CD4-positive, alpha-beta T cell (primary cell): ENCODE measurements at regions of chr16 and their contacts with region 1.

Region 1: DNA sequence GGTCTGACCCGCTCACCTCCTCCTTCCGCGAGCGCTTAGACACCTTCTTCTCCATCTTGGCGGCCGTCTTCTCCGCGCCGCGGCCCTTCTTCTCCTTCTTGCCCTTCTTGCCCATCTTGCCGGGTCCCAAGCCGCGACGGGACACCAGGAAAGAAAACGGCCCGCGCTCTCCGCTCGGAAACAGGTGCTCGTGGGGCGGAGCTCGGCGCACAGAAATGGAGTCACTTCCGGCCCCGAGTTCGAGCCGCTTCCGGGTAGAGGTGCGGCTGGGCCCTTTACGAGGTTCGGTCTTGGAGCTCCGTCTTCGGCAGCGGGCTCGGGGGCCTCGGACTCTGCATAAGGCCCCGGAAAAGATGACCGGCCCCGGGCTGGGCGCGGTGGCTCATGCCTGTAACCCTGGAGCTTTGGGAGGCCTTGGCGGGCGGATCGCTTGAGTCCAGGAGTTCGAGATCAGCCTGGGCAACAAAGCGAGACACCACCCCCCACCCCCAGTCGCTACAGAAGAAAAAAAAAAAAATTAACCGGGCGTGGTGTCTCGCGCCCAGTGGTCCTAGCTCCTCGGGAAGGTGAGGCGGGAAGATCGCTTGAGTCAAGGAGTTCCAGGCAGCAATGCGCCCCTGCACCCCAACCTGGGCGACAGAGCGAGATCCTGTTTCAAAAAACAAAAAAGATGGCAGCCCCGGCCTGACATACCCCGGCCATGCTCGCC is at the start of gene KLHDC4:
- DNase-seq: peak; percentile 79 to 94 (median 86)
- ATAC-seq: peak; percentile 74
- H3K4me3 ChIP-seq: peak within 1 kb of the TSS; percentile 95
- H3K4me3 Mint-ChIP-seq: peak within 1 kb of the TSS; percentile 99
- H3K27ac ChIP-seq: peak within 1 kb of the TSS; percentile 95
- H3K27ac Mint-ChIP-seq: peak within 1 kb of the TSS; percentile 97
- H3K4me1 ChIP-seq: peaks cover 49% of the 10 kb centered on the region
- H3K4me1 Mint-ChIP-seq: peaks cover 40% of the 10 kb centered on the region
- H3K27me3 ChIP-seq: no peaks in the 10 kb centered on the region
- H3K27me3 Mint-ChIP-seq: no peaks in the 10 kb centered on the region
- CTCF ChIP-seq: no peak
- total RNA-seq, gene KLHDC4: 41.4 to 43.0 TPM

Region 2: DNA sequence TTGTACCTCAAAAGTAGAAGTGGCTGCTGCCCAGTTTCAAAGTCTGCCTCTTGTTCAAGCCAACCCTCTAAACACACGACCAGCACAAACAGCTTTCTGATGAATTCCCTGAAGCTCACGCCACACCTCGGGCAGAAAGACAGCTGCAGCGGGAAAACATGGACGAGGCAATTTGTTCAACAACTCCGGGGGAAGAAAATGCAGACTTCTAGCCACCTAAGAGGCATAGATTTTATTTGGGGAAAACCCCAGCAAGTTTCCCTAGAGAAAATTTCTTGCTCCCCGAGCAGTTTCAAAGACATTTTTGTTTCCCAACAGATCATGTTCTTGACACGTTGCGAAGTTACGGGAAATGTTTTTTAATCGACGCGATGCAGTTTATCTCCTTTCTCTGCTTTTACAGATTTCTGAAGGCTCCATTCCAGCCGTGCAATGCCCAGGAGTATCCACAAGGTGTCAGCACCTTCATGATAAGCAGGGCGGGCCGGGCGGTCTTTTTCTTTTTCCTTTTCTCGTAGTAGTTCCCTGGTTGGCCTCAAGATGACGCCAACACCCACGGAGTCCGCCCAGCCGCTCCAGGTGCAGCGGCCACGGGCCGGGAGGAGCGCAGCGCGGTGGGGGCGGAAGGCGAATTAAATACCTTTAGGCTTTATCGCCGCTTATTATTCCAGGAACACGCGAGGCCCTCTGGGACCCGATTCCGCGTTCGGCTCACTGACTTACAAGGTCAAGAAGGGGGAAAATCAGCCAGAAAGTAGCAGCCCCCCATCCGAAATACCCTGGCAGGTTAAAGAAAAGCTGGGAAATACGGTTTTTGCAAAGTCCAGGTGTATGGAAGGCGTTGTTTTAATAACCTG is 1202.2 kb before region 1 on chr16:
- CTCF ChIA-PET with region 1: no interaction called
- POLR2A ChIA-PET with region 1: no interaction called
- intact Hi-C with region 1: loop called (anchors 5 kb)
- DNase-seq: peak; percentile 76 to 92 (median 84)
- ATAC-seq: peak; percentile 99
- H3K4me3 ChIP-seq: peak overlapping the region; percentile 11
- H3K4me3 Mint-ChIP-seq: peak overlapping the region; percentile 30
- H3K27ac ChIP-seq: no peak overlapping the region
- H3K27ac Mint-ChIP-seq: no peak overlapping the region
- H3K4me1 ChIP-seq: peaks cover 31% of the 10 kb centered on the region
- H3K4me1 Mint-ChIP-seq: peaks cover 26% of the 10 kb centered on the region
- H3K27me3 ChIP-seq: peaks cover 39 to 61% of the 10 kb centered on the region in 2 experiments
- H3K27me3 Mint-ChIP-seq: peaks cover 84% of the 10 kb centered on the region
- CTCF ChIP-seq: peak; percentile 100

Region 3: DNA sequence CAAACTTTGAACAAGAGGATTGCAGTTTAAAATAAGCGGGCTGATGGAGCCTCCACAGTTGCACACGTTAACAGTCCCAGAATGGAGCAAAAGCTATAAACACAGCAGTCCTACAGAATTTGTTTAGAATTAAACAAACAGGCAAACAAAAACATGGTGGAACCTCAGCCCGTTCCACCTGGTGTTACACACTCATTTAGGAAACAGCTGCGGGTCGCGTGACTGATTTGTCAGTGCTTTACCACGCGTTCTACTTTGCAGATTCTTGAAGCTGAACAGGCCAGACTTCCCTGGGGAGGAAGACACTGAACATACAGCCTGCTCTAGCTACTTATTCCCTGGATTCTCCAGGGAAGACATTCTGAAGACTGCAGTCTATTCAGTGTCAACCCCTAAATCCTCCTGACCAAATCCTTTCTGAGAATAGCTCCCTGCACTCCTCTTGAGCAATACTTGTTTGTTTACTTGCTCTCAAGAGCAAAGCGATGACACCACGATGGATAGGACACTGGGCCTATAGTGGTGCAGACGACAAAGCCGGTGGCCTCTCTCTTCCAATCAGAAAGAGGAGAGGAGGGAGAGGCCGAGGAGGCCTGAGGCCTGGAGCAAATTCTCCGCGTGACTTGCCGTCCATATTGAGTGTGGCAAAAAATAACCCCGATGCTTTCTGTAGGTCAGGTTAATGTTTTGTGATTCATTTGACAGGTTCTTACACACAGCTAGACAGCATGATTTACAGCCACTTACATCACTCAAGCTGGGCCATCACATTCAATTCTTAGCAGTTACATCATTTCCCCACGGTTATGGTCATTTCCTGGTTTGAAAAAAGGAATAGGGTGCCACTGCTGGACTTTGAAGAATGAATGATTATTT is 377.8 kb before region 1 on chr16:
- CTCF ChIA-PET with region 1: no interaction called
- POLR2A ChIA-PET with region 1: interaction called, 10 read pairs
- intact Hi-C with region 1: loop called in 1 of 2 experiments (anchors 5 kb)
- DNase-seq: peak; percentile 74 to 97 (median 82)
- ATAC-seq: peak; percentile 71
- H3K4me3 ChIP-seq: peak overlapping the region; percentile 8
- H3K4me3 Mint-ChIP-seq: peak overlapping the region; percentile 79
- H3K27ac ChIP-seq: peak overlapping the region; percentile 70 to 82
- H3K27ac Mint-ChIP-seq: peak overlapping the region; percentile 98
- H3K4me1 ChIP-seq: peaks cover 49% of the 10 kb centered on the region
- H3K4me1 Mint-ChIP-seq: peaks cover 49% of the 10 kb centered on the region
- H3K27me3 ChIP-seq: no peaks in the 10 kb centered on the region
- H3K27me3 Mint-ChIP-seq: peaks cover 4% of the 10 kb centered on the region
- CTCF ChIP-seq: no peak

Region 4: DNA sequence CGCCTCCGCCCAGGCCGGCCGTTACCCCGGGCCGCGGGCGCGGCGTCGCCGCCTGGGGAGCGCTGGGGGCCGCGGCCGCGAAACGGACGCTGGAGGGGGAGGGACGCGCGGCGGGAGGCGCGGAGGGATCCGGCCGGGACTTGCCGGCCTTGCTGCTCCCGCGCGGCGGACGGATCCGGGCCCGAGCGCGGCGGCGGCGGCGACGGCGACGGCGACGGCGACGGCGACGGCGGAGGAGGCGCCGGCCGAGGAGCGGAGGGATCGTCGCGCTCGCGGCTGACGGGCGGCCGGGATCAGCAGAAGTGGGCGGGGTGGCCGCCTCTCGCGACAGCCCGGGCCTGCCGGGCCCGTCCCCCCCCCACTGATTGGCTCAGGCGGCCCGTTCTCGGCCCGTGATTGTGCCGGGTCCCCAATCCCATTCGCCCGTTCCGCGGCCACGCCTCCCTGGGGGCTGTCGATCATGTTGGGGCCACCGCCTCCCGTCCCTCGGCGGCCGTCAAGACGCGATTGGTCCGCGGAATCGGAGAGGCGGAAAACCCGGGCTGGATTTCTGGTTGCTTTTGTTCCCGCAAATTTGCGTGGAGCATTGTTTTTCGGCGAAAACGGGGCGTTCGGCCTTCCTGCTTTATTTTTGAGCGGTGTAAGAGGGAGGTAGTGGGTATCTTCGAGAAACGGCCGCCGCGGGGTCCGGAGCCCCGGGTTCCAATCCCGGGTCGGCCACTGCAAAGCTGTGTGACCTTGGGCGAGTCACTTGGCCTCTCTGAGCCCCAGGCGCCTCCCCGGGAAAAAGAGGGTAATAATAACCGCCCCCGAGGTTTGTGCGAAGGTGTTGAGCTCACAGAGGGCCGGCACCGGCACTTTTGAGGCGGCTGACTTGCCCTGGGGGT is 273.0 kb before region 1 on chr16 and contains the start of gene ZCCHC14:
- CTCF ChIA-PET with region 1: no interaction called
- POLR2A ChIA-PET with region 1: interaction called, 3 read pairs
- intact Hi-C with region 1: loop called in 1 of 2 experiments (anchors 2 kb)
- DNase-seq: peak; percentile 98 to 99 (median 99)
- ATAC-seq: peak; percentile 91
- H3K4me3 ChIP-seq: peak within 1 kb of the TSS; percentile 61
- H3K4me3 Mint-ChIP-seq: peak within 1 kb of the TSS; percentile 94
- H3K27ac ChIP-seq: no peak within 1 kb of the TSS
- H3K27ac Mint-ChIP-seq: peak within 1 kb of the TSS; percentile 81
- H3K4me1 ChIP-seq: peaks cover 54% of the 10 kb centered on the region
- H3K4me1 Mint-ChIP-seq: peaks cover 47% of the 10 kb centered on the region
- H3K27me3 ChIP-seq: peaks cover 0 to 3% of the 10 kb centered on the region in 2 experiments
- H3K27me3 Mint-ChIP-seq: no peaks in the 10 kb centered on the region
- CTCF ChIP-seq: no peak
- total RNA-seq, gene ZCCHC14: 16.4 to 18.3 TPM

Region 5: GRCh38 chr16:87587636-87588035 is 178.3 kb before region 1 on chr16:
- CTCF ChIA-PET with region 1: no interaction called
- POLR2A ChIA-PET with region 1: no interaction called
- intact Hi-C with region 1: loop called (anchors 2 kb)
- DNase-seq: no peak
- ATAC-seq: no peak
- H3K4me3 ChIP-seq: no peak overlapping the region
- H3K4me3 Mint-ChIP-seq: no peak overlapping the region
- H3K27ac ChIP-seq: no peak overlapping the region
- H3K27ac Mint-ChIP-seq: no peak overlapping the region
- H3K4me1 ChIP-seq: no peaks in the 10 kb centered on the region
- H3K4me1 Mint-ChIP-seq: no peaks in the 10 kb centered on the region
- H3K27me3 ChIP-seq: peaks cover 11 to 17% of the 10 kb centered on the region in 2 experiments
- H3K27me3 Mint-ChIP-seq: peaks cover 62% of the 10 kb centered on the region
- CTCF ChIP-seq: no peak

Region 6: GRCh38 chr16:87778830-87779579 is 13.1 kb after region 1 on chr16:
- CTCF ChIA-PET with region 1: interaction called, 33 read pairs
- POLR2A ChIA-PET with region 1: interaction called, 13 read pairs
- intact Hi-C with region 1: no loop called
- DNase-seq: peak; percentile 87 to 96 (median 91)
- ATAC-seq: peak; percentile 82
- H3K4me3 ChIP-seq: no peak overlapping the region
- H3K4me3 Mint-ChIP-seq: peak overlapping the region; percentile 66
- H3K27ac ChIP-seq: no peak overlapping the region
- H3K27ac Mint-ChIP-seq: peak overlapping the region; percentile 87
- H3K4me1 ChIP-seq: peaks cover 43% of the 10 kb centered on the region
- H3K4me1 Mint-ChIP-seq: peaks cover 38% of the 10 kb centered on the region
- H3K27me3 ChIP-seq: no peaks in the 10 kb centered on the region
- H3K27me3 Mint-ChIP-seq: no peaks in the 10 kb centered on the region
- CTCF ChIP-seq: peak; percentile 93